ENCODE measurements at regions of chr12 and their contacts with region 1.

Region 1: GRCh38 chr12:120640840-120641833 is 711 bp downstream of the CABP1 start:
- DNase-seq: peak; percentile 67
- CTCF ChIP-seq: no peak

Region 2: GRCh38 chr12:120710031-120710804 is 69.1 kb after region 1 on chr12 and contains the start of gene UNC119B:
- in situ Hi-C with region 1: loop called (anchors 10 kb)
- DNase-seq: peak; percentile 92
- CTCF ChIP-seq: no peak

Measured in GM13977 (cell line).